ENCODE measurements at regions of chr2 and their contacts with region 1.

Region 1: GRCh38 chr2:25314514-25315315 is 27.0 kb downstream of the DNMT3A start:
- DNase-seq: peak; percentile 80
- ATAC-seq: peak; percentile 79
- H3K4me3 Mint-ChIP-seq: no peak overlapping the region
- H3K27ac Mint-ChIP-seq: peak overlapping the region; percentile 83; the same call in 1 of the 2 replicates
- H3K4me1 Mint-ChIP-seq: peaks cover 54% of the 10 kb centered on the region
- H3K27me3 Mint-ChIP-seq: no peaks in the 10 kb centered on the region
- CTCF ChIP-seq: no peak

Region 2: DNA sequence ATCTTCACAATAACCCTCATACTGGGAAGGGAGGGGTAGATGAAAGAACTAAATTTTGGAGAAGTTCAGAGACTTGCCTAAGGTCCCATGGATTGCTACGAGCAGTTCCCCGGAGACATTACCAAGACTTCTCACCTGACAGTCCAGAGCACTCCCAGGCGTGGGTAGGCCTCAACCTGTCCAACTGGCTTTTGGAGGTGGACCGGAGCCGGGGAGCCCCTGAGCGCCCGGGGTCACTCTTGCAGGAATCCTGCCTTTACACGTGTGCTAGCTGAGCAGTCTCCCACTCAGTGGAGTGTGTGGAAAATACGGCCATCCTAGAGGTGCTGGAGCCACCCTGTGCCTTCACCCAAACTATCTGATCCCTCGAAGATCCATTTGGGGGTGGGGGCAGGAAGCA is 154.3 kb before region 1 on chr2:
- CTCF ChIA-PET with region 1: no interaction called
- POLR2A ChIA-PET with region 1: no interaction called
- DNase-seq: no peak
- ATAC-seq: no peak
- H3K4me3 Mint-ChIP-seq: no peak overlapping the region
- H3K27ac Mint-ChIP-seq: no peak overlapping the region
- H3K4me1 Mint-ChIP-seq: peaks cover 13% of the 10 kb centered on the region
- H3K27me3 Mint-ChIP-seq: peaks cover 6% of the 10 kb centered on the region
- CTCF ChIP-seq: no peak

Region 3: DNA sequence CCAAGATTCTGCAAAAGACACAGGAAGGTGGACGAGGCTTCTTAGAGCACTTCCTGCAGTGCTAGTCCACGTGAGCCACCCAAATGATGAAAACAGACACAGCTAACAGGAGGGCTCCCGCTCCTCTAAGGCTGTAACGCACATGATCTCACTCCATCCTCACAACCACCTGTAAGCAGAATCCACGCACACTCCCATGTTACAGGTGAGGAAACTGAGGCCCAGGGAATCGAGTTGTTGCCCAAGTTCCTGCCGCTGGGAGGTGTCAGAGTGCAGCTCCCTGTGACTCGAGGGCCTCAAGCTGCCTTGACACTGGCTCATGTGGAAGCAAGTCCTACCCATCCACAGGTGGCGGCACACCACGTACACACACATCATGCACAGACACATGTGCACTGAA is 22.6 kb after region 1 on chr2:
- CTCF ChIA-PET with region 1: interaction called, 64 read pairs
- POLR2A ChIA-PET with region 1: interaction called, 7 read pairs
- DNase-seq: no peak
- ATAC-seq: no peak
- H3K4me3 Mint-ChIP-seq: no peak overlapping the region
- H3K27ac Mint-ChIP-seq: peak overlapping the region; percentile 36; the same call in 1 of the 2 replicates
- H3K4me1 Mint-ChIP-seq: peaks cover 67% of the 10 kb centered on the region
- H3K27me3 Mint-ChIP-seq: no peaks in the 10 kb centered on the region
- CTCF ChIP-seq: no peak

Region 4: GRCh38 chr2:25342372-25343186 is 27.9 kb after region 1 on chr2:
- CTCF ChIA-PET with region 1: interaction called, 64 read pairs
- POLR2A ChIA-PET with region 1: interaction called, 3 read pairs
- DNase-seq: peak; percentile 95
- ATAC-seq: peak; percentile 83
- H3K4me3 Mint-ChIP-seq: peak overlapping the region; percentile 65
- H3K27ac Mint-ChIP-seq: no peak overlapping the region
- H3K4me1 Mint-ChIP-seq: peaks cover 29% of the 10 kb centered on the region
- H3K27me3 Mint-ChIP-seq: peaks cover 28% of the 10 kb centered on the region
- CTCF ChIP-seq: peak; percentile 93

Region 5: DNA sequence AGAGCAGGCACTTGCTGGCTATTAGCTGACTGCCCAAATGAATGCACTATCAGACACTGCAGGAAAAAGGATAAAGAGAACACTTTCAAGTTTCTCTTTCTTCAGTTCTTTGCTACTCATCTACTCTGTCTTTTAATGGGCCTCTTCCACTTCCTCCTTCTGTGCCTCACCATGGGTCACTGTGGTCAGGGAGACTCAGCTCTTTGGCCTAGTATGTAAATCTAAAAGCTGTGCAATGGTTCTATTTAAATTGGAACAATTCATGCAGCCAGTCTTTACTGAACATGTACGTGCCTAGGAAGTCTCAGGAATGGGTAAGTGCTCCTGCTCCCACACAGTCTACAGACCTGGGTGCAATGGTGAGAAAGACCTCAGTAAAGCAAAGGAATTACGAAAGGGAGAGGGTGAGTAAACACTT is 106.1 kb after region 1 on chr2:
- CTCF ChIA-PET with region 1: no interaction called
- POLR2A ChIA-PET with region 1: no interaction called
- DNase-seq: no peak
- ATAC-seq: no peak
- H3K4me3 Mint-ChIP-seq: no peak overlapping the region
- H3K27ac Mint-ChIP-seq: no peak overlapping the region
- H3K4me1 Mint-ChIP-seq: peaks cover 13% of the 10 kb centered on the region
- H3K27me3 Mint-ChIP-seq: no peaks in the 10 kb centered on the region
- CTCF ChIP-seq: no peak

Measured in WTC11 (cell line).